ENCODE measurements at regions of chr17 and their contacts with region 1.

Region 1: DNA sequence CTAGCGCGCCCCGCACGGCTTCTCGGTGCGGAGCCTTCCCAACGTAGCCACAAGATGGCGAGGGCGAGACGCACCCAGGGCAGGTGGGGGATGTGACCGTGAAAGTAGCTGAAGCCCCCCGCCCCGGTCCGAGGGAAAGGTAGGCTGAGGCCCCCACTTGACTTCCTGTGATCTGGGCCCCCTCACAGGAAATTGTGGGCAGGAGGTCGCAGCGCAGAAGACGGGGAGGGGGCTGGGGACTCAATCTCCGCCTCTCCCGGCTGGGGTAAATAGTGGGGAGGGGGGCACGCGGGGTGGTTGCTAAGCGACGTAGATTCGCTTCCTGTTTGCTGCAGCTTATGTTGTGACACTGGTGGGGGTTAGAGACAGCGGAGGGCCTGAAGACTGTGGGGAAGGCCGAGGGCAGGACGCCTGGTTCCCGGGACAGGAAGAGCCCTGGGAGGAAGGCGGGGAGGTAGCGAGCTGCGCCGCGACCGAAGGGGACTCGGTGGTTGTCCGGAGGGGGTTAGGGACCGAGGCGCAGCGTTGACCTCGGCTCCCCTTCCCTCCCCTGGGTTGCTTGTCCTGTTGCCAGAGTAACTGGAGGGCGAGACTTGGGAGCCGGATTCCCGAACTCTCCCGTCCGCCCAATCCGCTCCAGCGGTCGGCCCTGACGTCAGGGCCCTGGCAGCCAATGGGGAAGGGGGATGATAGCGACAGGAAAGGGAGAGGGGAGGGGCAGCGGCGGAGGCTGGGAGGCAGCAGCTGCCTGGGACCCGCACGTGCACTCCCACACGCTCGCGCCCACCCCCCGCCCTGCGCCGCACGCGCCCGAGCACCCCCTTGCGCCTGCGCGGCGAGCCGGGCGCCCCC is 1.2 kb downstream of the KDM6B start:
- DNase-seq: peak; percentile 80
- H3K4me3 Mint-ChIP-seq: peak overlapping the region; percentile 91
- H3K27ac Mint-ChIP-seq: peak overlapping the region; percentile 89
- H3K4me1 Mint-ChIP-seq: peaks cover 42% of the 10 kb centered on the region
- H3K27me3 Mint-ChIP-seq: peaks cover 11% of the 10 kb centered on the region

Region 2: DNA sequence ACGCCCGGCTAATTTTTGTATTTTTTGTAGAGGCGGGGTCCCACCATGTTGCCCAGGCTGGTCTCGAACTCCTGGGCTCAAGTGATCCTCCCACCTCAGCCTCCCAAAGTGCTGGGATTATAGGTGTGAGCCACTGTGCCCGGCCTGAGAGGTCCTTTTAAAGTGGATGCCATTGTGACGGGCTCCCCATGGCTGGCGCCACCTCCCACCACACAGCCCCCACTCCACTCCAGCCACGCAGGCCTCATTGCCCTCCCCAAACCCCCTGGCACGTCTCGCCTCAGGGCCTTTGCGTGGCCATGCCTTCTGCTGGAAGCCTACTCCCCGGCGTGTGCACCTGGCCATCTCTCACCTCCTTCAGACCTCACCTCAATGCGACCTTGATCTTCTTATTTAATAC is 13.1 kb before region 1 on chr17:
- intact Hi-C with region 1: loop called (anchors 1 kb)
- DNase-seq: no peak
- H3K4me3 Mint-ChIP-seq: no peak overlapping the region
- H3K27ac Mint-ChIP-seq: no peak overlapping the region
- H3K4me1 Mint-ChIP-seq: peaks cover 8% of the 10 kb centered on the region
- H3K27me3 Mint-ChIP-seq: peaks cover 9% of the 10 kb centered on the region

Region 3: DNA sequence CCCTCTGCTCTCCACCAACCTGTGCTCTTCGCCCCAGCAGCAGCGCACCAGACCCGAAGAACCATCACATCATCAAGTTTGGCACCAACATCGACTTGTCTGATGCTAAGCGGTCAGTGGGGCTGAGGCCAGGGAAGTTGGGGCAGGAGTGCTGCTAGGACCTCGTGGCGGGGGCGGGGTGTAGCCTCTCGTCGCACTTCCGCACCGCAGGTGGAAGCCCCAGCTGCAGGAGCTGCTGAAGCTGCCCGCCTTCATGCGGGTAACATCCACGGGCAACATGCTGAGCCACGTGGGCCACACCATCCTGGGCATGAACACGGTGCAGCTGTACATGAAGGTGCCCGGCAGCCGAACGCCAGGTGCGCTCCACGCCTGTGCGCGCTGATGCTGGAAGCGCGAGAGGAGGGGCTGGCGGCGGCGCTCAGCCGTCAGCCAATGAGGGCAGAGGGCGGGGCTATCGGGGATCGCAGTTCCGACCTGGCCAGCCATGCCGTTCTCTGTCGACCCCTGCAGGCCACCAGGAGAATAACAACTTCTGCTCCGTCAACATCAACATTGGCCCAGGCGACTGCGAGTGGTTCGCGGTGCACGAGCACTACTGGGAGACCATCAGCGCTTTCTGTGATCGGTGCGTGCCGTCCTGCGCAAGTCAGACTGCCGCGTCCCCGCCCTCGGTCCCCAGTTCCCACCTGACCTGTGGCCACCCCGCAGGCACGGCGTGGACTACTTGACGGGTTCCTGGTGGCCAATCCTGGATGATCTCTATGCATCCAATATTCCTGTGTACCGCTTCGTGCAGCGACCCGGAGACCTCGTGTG is 16.5 kb after region 1 on chr17:
- intact Hi-C with region 1: loop called (anchors 1 kb)
- DNase-seq: peak; percentile 92
- H3K4me3 Mint-ChIP-seq: peak overlapping the region; percentile 61
- H3K27ac Mint-ChIP-seq: no peak overlapping the region
- H3K4me1 Mint-ChIP-seq: peaks cover 30% of the 10 kb centered on the region
- H3K27me3 Mint-ChIP-seq: no peaks in the 10 kb centered on the region

Region 4: DNA sequence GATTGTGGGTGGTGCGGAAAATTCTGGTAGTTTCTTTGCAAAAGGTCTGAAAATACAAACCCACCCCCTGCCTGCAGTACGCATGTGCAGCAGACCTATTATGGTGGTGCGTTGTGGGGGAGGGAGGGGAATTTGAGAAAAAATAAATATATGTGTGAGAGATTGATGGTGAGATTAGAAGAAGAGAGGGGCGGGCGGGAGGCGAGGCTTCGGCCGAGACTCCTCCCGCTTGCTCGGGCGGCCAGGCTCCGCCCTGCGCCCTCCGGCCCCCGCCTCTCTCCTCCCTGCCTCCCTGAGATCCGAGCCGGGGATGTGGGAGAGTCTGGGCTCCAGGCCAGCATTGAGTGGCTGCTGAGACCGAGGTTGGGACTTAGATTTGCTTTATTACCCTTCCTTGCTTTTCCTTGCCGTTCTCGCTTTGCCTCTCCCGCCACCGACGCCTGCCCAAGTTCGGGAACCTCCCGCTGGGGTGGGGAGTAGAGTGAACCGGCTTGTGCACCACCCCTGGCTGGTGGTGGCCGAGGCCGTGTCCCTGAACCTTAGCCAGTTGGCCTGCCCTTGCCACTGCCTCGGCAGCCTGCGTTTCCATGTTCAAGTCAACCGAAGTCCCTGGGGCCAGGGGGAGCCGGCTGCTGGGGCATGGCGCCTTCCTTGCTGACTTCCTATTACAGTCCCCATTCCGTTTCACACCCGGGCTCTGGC is 52.4 kb after region 1 on chr17:
- intact Hi-C with region 1: loop called (anchors 2 kb)
- DNase-seq: peak; percentile 87
- H3K4me3 Mint-ChIP-seq: no peak overlapping the region
- H3K27ac Mint-ChIP-seq: no peak overlapping the region
- H3K4me1 Mint-ChIP-seq: peaks cover 8% of the 10 kb centered on the region
- H3K27me3 Mint-ChIP-seq: no peaks in the 10 kb centered on the region